Transverse colon (tissue), 4 donors: ENCODE measurements at regions of chr12 and their contacts with region 1.

Region 1: GRCh38 chr12:80186727-80187217 is 87.4 kb downstream of the OTOGL start:
- DNase-seq: peak; percentile 37
- H3K4me3 ChIP-seq: no peak overlapping the region
- H3K27ac ChIP-seq: peak overlapping the region; percentile 77 to 85 (median 80)
- H3K4me1 ChIP-seq: peaks cover 2 to 21% (median 8%) of the 10 kb centered on the region in 4 donors
- H3K27me3 ChIP-seq: no peaks in the 10 kb centered on the region
- CTCF ChIP-seq: peak; percentile 55 to 63 (median 59)
- EP300 ChIP-seq: peak; percentile 53
- POLR2A ChIP-seq: no peak

Region 2: DNA sequence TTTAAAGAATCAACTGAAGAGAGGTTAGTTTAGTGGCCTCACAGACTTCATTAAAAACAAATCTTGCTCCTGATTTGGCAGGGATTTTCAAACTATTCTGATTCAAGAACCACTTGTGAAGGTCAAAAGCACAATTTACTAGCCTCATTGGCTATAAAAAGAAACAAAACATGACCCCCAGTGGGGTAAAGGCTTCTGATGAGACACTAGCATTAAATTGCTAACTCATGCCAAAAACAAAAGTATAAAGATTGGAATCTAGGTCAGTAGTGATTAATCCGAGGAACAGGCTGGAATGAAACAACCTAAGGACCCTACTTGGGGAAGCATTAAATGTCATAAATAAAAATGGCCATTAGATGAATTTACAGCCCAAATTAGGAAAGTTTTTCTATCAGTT is 808.3 kb before region 1 on chr12:
- in situ Hi-C with region 1: loop called in 1 of 4 experiments (anchors 25 kb)
- intact Hi-C with region 1: no loop called
- DNase-seq: no peak
- H3K4me3 ChIP-seq: no peak overlapping the region
- H3K27ac ChIP-seq: no peak overlapping the region
- H3K4me1 ChIP-seq: peaks cover 0 to 4% (median 0%) of the 10 kb centered on the region in 4 donors
- H3K27me3 ChIP-seq: no peaks in the 10 kb centered on the region
- CTCF ChIP-seq: no peak
- EP300 ChIP-seq: no peak
- POLR2A ChIP-seq: no peak

Region 3: DNA sequence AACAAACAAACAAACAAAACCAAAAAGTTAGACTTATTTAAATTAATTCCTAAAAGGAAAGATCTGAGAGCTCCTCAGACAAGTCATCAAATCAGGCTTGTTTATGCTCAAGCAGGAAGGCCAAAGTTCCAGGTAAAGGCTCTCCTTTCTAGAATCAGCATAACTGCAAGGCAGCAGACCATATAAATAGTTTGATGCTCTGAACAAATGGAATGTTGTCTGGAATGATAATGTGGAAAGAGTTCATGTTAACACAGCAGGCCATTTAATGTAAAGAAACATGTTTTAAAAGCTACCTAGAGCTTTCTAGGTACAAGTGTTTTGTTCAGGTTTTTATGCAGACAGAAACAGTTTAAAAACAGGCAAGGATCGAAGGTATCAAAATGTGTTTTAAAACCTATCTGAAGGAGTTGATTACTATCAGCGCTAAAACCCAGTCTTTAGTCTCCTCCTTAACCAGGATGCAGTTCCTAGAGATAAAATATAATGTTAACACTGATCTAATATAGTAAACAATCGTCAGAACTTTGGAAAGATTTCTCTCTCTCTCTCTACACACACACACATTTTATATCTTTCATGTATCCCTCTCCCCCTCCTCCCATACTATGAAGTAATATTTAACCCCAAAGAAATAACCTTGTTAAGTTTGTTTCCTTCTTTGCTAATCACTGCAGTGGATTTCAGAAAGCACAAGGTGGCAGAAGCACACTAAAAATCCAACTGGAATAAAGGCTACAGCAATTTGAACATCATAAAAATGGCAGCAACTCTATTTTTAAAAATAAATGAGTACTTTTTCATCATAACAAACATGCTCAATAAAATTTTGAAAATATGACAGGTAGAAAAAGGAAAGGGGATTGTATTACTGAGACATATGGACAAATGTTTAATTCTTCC is 631.5 kb before region 1 on chr12:
- in situ Hi-C with region 1: loop called in 1 of 4 experiments (anchors 25 kb)
- intact Hi-C with region 1: no loop called
- DNase-seq: no peak
- H3K4me3 ChIP-seq: no peak overlapping the region
- H3K27ac ChIP-seq: no peak overlapping the region
- H3K4me1 ChIP-seq: peaks cover 4 to 33% (median 11%) of the 10 kb centered on the region in 4 donors
- H3K27me3 ChIP-seq: no peaks in the 10 kb centered on the region
- CTCF ChIP-seq: peak; percentile 49 to 74 (median 54)
- EP300 ChIP-seq: no peak
- POLR2A ChIP-seq: no peak

Region 4: DNA sequence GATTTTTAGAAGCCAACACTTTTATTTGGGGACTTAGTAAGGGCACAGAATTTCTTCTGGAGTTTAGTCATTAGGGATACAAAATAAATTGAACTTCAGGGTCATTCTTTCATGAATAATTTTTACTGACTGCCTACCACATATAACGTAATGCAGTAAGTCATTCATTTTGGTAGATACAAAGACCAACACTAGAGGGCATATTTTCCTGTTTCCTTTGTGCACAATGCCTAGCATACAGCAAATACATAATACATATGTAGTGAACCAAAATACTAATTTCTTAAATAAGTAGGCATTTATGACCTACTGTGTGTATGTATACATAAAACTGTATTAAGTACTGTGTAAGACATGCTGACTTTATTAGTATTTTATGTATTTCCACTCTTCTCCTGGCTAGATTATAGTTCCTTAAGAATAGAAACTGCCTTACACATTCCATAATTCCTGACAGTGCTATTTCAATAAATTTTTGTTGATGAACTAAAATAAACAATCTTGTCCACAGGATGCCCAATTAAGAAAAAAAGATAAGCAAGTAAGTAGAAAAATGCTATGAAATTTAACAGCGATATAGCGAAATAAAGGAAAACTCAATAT is 299.8 kb before region 1 on chr12:
- in situ Hi-C with region 1: loop called in 1 of 4 experiments (anchors 25 kb)
- intact Hi-C with region 1: no loop called
- DNase-seq: no peak
- H3K4me3 ChIP-seq: no peak overlapping the region
- H3K27ac ChIP-seq: peak overlapping the region in 1 of 4 donors; percentile 17
- H3K4me1 ChIP-seq: peaks cover 9 to 61% (median 16%) of the 10 kb centered on the region in 4 donors
- H3K27me3 ChIP-seq: no peaks in the 10 kb centered on the region
- CTCF ChIP-seq: peak; percentile 45 to 62 (median 54)
- EP300 ChIP-seq: no peak
- POLR2A ChIP-seq: no peak

Region 5: GRCh38 chr12:80241576-80242273 is 55.0 kb after region 1 on chr12:
- in situ Hi-C with region 1: no loop called
- intact Hi-C with region 1: no loop called
- DNase-seq: no peak
- H3K4me3 ChIP-seq: no peak overlapping the region
- H3K27ac ChIP-seq: no peak overlapping the region
- H3K4me1 ChIP-seq: no peaks in the 10 kb centered on the region
- H3K27me3 ChIP-seq: no peaks in the 10 kb centered on the region
- CTCF ChIP-seq: no peak
- EP300 ChIP-seq: no peak
- POLR2A ChIP-seq: no peak